Gastrocnemius medialis (tissue), 4 donors: ENCODE measurements at regions of chr2 and their contacts with region 1.

Region 1: GRCh38 chr2:98157557-98157956 is 70.6 kb downstream of the VWA3B start:
- DNase-seq: no peak
- ATAC-seq: no peak
- H3K4me3 ChIP-seq: no peak overlapping the region
- H3K27ac ChIP-seq: peak overlapping the region; percentile 93 to 99 (median 97)
- H3K4me1 ChIP-seq: peaks cover 54% of the 10 kb centered on the region in 2 donors
- H3K27me3 ChIP-seq: no peaks in the 10 kb centered on the region
- CTCF ChIP-seq: no peak
- POLR2A ChIP-seq: no peak

Region 2: GRCh38 chr2:97870396-97870843 is 287.1 kb before region 1 on chr2:
- in situ Hi-C with region 1: no loop called
- intact Hi-C with region 1: loop called (anchors 1 kb)
- DNase-seq: peak; percentile 60 to 63
- ATAC-seq: peak; percentile 85 to 90
- H3K4me3 ChIP-seq: peak overlapping the region in 3 of 4 donors; percentile 16 to 31 (median 30)
- H3K27ac ChIP-seq: peak overlapping the region; percentile 88 to 95 (median 92)
- H3K4me1 ChIP-seq: peaks cover 58 to 65% of the 10 kb centered on the region in 2 donors
- H3K27me3 ChIP-seq: no peaks in the 10 kb centered on the region
- CTCF ChIP-seq: no peak
- POLR2A ChIP-seq: peak in 1 of 2 donors; percentile 18

Region 3: DNA sequence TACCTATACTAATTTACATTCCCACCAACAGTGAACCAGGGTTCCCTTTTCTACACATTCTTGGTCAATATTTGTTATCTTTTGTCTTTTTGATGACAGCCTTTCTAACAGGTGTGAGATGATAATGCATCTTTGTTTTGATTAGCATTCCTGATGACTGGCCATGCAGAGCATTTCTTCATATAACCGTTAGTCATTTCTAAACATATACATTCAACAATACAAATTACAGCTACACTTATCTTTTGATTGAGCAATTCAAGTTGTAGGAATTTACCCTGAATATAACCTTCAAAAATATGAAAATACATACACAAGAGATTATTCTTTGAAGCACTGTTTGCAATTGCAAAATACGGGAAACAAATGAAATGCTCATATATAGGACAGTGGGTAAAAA is 256.8 kb before region 1 on chr2:
- in situ Hi-C with region 1: no loop called
- intact Hi-C with region 1: no loop called
- DNase-seq: no peak
- ATAC-seq: no peak
- H3K4me3 ChIP-seq: no peak overlapping the region
- H3K27ac ChIP-seq: no peak overlapping the region
- H3K4me1 ChIP-seq: peaks cover 0 to 3% of the 10 kb centered on the region in 2 donors
- H3K27me3 ChIP-seq: no peaks in the 10 kb centered on the region
- CTCF ChIP-seq: no peak
- POLR2A ChIP-seq: no peak

Region 4: GRCh38 chr2:98009887-98010760 is 147.4 kb before region 1 on chr2:
- in situ Hi-C with region 1: no loop called
- intact Hi-C with region 1: loop called (anchors 2 kb)
- DNase-seq: peak; percentile 35 to 74
- ATAC-seq: peak; percentile 77 to 88
- H3K4me3 ChIP-seq: no peak overlapping the region
- H3K27ac ChIP-seq: peak overlapping the region; percentile 89 to 92 (median 90)
- H3K4me1 ChIP-seq: peaks cover 20 to 23% of the 10 kb centered on the region in 2 donors
- H3K27me3 ChIP-seq: no peaks in the 10 kb centered on the region
- CTCF ChIP-seq: no peak
- POLR2A ChIP-seq: no peak

Region 5: GRCh38 chr2:98086491-98087446 is 70.8 kb before region 1 on chr2 and contains the start of gene VWA3B:
- in situ Hi-C with region 1: no loop called
- intact Hi-C with region 1: loop called (anchors 2 kb)
- DNase-seq: peak; percentile 12 to 38
- ATAC-seq: peak; percentile 76 to 81
- H3K4me3 ChIP-seq: peak within 1 kb of the TSS; percentile 56 to 63 (median 58)
- H3K27ac ChIP-seq: peak within 1 kb of the TSS in 1 of 4 donors; percentile 30
- H3K4me1 ChIP-seq: peaks cover 4 to 17% of the 10 kb centered on the region in 2 donors
- H3K27me3 ChIP-seq: no peaks in the 10 kb centered on the region
- CTCF ChIP-seq: no peak
- POLR2A ChIP-seq: no peak
- total RNA-seq, gene VWA3B: not detected